Heart left ventricle (tissue), 16 donors: ENCODE measurements at regions of chr15 and their contacts with region 1.

Region 1: GRCh38 chr15:52857937-52858781 is 68.0 kb upstream of the ONECUT1 start:
- DNase-seq: no peak
- ATAC-seq: no peak
- H3K4me3 ChIP-seq: peak overlapping the region in 2 of 12 donors; percentile 3 to 19
- H3K27ac ChIP-seq: no peak overlapping the region
- H3K4me1 ChIP-seq: peaks cover 0 to 9% (median 0%) of the 10 kb centered on the region in 12 donors
- H3K27me3 ChIP-seq: peaks cover 0 to 6% (median 0%) of the 10 kb centered on the region in 9 donors
- CTCF ChIP-seq: no peak
- POLR2A ChIP-seq: no peak

Region 2: GRCh38 chr15:52378746-52379394 is 479.3 kb before region 1 on chr15:
- intact Hi-C with region 1: no loop called
- DNase-seq: no peak
- ATAC-seq: no peak
- H3K4me3 ChIP-seq: no peak overlapping the region
- H3K27ac ChIP-seq: no peak overlapping the region
- H3K4me1 ChIP-seq: no peaks in the 10 kb centered on the region
- H3K27me3 ChIP-seq: no peaks in the 10 kb centered on the region
- CTCF ChIP-seq: no peak
- POLR2A ChIP-seq: no peak

Region 3: GRCh38 chr15:52789601-52790161 is 68.5 kb before region 1 on chr15:
- intact Hi-C with region 1: loop called in 1 of 10 experiments (anchors 5 kb)
- DNase-seq: no peak
- ATAC-seq: no peak
- H3K4me3 ChIP-seq: peak overlapping the region in 11 of 12 donors; percentile 34 to 63 (median 51)
- H3K27ac ChIP-seq: no peak overlapping the region
- H3K4me1 ChIP-seq: peaks cover 0 to 66% (median 28%) of the 10 kb centered on the region in 12 donors
- H3K27me3 ChIP-seq: peaks cover 47 to 96% (median 88%) of the 10 kb centered on the region in 9 donors
- CTCF ChIP-seq: no peak
- POLR2A ChIP-seq: no peak